ENCODE measurements at regions of chr1 and their contacts with region 1.

Region 1: DNA sequence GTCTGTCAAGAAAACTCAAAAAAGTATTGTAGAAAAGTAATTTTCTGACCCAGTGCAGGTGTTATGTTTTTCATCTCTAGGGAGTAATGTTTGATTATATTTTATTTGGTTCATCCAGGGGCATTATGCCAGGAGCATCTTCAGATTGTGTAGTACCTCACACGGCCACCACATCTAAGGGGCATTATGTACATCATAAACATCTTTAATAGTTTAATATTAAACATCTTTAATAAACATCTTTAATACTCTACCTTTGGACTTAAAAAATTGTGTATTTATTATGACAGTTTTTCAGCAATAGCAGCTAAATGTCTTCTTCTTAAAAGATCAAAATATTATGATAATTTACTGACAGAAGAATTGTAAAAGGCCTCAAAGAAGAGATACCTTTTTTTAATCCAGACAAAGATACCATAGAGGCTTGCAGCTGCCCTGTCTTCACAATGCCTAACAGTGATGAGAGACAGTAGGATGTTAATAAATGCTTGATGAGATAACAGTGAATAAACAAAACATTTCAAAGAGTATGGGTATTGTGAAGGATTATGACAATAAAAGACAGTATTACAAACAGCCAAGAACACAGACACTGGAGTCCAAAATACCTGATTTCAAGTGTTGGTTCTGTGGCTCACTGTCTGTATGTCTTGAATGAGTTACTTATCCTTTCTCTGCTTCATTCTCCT is 240.9 kb upstream of the ADGRL2 start:
- H3K4me3 ChIP-seq: no peak overlapping the region
- H3K27ac ChIP-seq: no peak overlapping the region
- H3K4me1 ChIP-seq: peaks cover 2% of the 10 kb centered on the region; the same call in 1 of the 2 replicates
- CTCF ChIP-seq: no peak

Region 2: GRCh38 chr1:81525085-81525484 is 34.7 kb before region 1 on chr1:
- CTCF ChIA-PET with region 1: no interaction called
- POLR2A ChIA-PET with region 1: no interaction called
- H3K4me3 ChIP-seq: no peak overlapping the region
- H3K27ac ChIP-seq: no peak overlapping the region
- H3K4me1 ChIP-seq: no peaks in the 10 kb centered on the region
- CTCF ChIP-seq: no peak

Region 3: GRCh38 chr1:81549604-81550127 is 10.1 kb before region 1 on chr1:
- CTCF ChIA-PET with region 1: interaction called, 11 read pairs
- POLR2A ChIA-PET with region 1: no interaction called
- H3K4me3 ChIP-seq: no peak overlapping the region
- H3K27ac ChIP-seq: no peak overlapping the region
- H3K4me1 ChIP-seq: peaks cover 5% of the 10 kb centered on the region; the same call in 1 of the 2 replicates
- CTCF ChIP-seq: peak; percentile 42; the same call in 1 of the 2 replicates

Region 4: DNA sequence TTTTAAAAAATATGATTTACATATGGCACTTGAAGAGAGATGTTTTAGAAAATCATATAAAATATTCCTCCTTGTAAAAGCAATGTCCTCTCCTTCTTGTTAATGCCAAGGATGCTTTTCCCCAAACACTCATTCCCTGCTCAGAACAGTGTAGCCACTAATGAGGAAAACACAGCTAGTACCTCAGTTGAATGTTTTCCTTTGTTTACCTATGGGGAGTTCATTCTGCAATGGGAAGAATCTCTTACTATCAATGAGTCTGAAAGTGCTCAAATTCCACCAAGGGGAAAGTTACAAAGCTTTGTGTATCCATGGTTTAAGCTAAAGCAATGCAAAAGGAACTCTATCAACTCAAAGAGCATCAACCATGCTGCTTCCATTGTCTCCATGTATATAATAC is 19.1 kb after region 1 on chr1:
- CTCF ChIA-PET with region 1: no interaction called
- POLR2A ChIA-PET with region 1: no interaction called
- H3K4me3 ChIP-seq: no peak overlapping the region
- H3K27ac ChIP-seq: no peak overlapping the region
- H3K4me1 ChIP-seq: no peaks in the 10 kb centered on the region
- CTCF ChIP-seq: no peak